ENCODE measurements at regions of chr1 and their contacts with region 1.

Region 1: DNA sequence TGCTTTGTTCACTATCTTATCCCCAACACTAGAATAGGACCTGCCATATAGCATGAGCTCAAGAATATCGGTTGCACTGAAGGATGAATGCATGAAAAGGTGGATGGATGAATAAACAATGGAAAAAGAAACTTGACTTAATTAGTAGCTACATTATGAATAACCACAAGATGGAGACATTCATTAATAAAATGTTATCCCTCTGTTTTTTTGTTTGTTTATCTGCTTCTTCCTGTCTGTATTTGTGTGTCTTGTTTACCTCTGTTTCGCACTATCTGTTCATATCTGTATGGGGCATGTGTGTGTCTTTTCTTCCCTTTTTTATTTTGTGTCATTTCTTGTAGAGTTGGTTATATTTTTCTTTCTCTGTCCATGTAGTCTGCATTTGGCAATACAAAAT is 1.1 kb upstream of the OR14I1 start:
- DNase-seq: no peak
- ATAC-seq: no peak; the same call in none of the 2 replicates
- H3K4me3 ChIP-seq: no peak overlapping the region
- H3K27ac ChIP-seq: no peak overlapping the region
- H3K4me1 ChIP-seq: no peaks in the 10 kb centered on the region
- H3K27me3 ChIP-seq: 0 out of 2 replicates have a peak, but pooled peaks cover 3% of the 10 kb centered on the region
- CTCF ChIP-seq: peak; percentile 73

Region 2: DNA sequence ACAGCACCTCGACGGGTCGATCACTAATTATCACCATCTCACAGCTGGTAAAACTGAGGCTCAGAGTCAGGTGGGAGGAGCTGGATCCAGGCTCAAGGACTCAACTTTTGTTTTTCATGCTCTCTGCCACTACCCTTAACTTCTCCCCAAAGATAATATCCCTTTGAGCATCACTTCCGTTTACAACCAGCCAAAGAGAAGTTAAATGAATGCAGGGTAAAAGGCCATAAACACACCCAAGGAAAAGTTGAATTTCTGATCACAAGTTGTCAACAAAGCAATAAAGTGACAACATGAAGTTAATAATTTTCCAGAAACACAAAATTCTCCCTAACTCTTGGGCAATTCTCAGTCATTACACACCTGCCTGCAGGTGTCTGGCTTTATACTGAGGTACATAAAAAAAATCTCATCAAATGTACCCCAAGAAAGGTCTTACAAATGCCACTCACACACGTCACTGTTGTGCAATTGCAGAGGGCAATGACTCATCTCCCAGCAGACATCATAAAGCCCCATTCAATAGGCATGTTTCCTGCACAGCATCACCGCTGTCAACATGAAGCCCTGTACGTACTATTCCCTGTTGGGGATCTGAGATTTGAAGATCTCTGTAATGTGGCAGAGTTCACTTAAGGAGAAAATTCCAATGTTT is 72.2 kb before region 1 on chr1:
- CTCF ChIA-PET with region 1: no interaction called
- POLR2A ChIA-PET with region 1: no interaction called
- intact Hi-C with region 1: no loop called
- DNase-seq: peak; percentile 52
- ATAC-seq: peak; percentile 50; the same call in 1 of the 2 replicates
- H3K4me3 ChIP-seq: no peak overlapping the region
- H3K27ac ChIP-seq: no peak overlapping the region
- H3K4me1 ChIP-seq: no peaks in the 10 kb centered on the region
- H3K27me3 ChIP-seq: 0 out of 2 replicates have a peak, but pooled peaks cover 1% of the 10 kb centered on the region
- CTCF ChIP-seq: no peak

Region 3: GRCh38 chr1:248807067-248807737 is 103.5 kb after region 1 on chr1:
- CTCF ChIA-PET with region 1: interaction called, 4 read pairs
- POLR2A ChIA-PET with region 1: no interaction called
- intact Hi-C with region 1: loop called (anchors 1 kb)
- DNase-seq: peak; percentile 60
- ATAC-seq: peak; percentile 39
- H3K4me3 ChIP-seq: no peak overlapping the region
- H3K27ac ChIP-seq: no peak overlapping the region
- H3K4me1 ChIP-seq: peaks cover 22% of the 10 kb centered on the region
- H3K27me3 ChIP-seq: no peaks in the 10 kb centered on the region
- CTCF ChIP-seq: peak; percentile 90

Region 4: GRCh38 chr1:248897412-248898337 is 194.0 kb after region 1 on chr1:
- CTCF ChIA-PET with region 1: no interaction called
- POLR2A ChIA-PET with region 1: no interaction called
- intact Hi-C with region 1: no loop called
- DNase-seq: no peak
- ATAC-seq: no peak
- H3K4me3 ChIP-seq: no peak overlapping the region
- H3K27ac ChIP-seq: no peak overlapping the region
- H3K4me1 ChIP-seq: no peaks in the 10 kb centered on the region
- H3K27me3 ChIP-seq: peaks cover 15% of the 10 kb centered on the region; the same call in 1 of the 2 replicates
- CTCF ChIP-seq: no peak

Measured in PC-3 (cell line).